K562 (cell line): ENCODE measurements at regions of chr19 and their contacts with region 1.

Region 1: GRCh38 chr19:35276706-35277281 is 5.5 kb upstream of the HAMP start:
- DNase-seq: no peak
- ATAC-seq: no peak
- H3K4me3 ChIP-seq: no peak overlapping the region
- H3K27ac ChIP-seq: no peak overlapping the region
- H3K4me1 ChIP-seq: peaks cover 2 to 39% of the 10 kb centered on the region in 2 experiments; a peak in 4 of 5 replicates
- H3K27me3 ChIP-seq: no peaks in the 10 kb centered on the region
- CTCF ChIP-seq: no peak
- EP300 ChIP-seq: no peak
- POLR2A ChIP-seq: no peak
- RAD21 ChIP-seq: no peak

Region 2: DNA sequence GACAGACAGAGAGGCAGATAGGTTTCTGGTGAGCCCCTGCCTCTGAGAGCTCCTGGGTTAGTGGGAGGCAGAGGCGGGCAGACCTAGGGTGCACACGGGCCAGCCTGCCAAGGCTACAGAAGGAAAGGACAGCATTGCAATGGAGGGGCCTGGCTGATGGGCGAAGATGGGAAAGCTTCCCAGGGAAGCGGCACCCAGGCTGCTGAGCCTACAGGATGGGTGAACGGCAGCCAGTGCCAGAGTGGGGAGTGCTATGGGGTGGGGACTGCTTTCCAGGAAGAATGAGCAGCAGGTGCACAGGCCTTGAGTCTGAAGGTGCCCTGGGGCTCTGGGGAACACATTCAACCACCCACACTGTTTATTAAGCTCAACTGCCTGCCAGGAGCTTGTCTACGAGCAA is 14.5 kb after region 1 on chr19:
- CTCF ChIA-PET with region 1: interaction called, 3 read pairs
- POLR2A ChIA-PET with region 1: interaction called, 10 read pairs
- in situ Hi-C with region 1: no loop called
- intact Hi-C with region 1: no loop called
- DNase-seq: no peak
- ATAC-seq: no peak
- H3K4me3 ChIP-seq: no peak overlapping the region
- H3K27ac ChIP-seq: no peak overlapping the region
- H3K4me1 ChIP-seq: peaks cover 10 to 42% of the 10 kb centered on the region in 2 experiments; a peak in 4 of 5 replicates
- H3K27me3 ChIP-seq: peaks cover 2 to 12% of the 10 kb centered on the region in 2 experiments; a peak in 2 of 5 replicates
- CTCF ChIP-seq: no peak
- EP300 ChIP-seq: no peak
- POLR2A ChIP-seq: no peak
- RAD21 ChIP-seq: no peak